ENCODE measurements at regions of chr13 and their contacts with region 1.

Region 1: GRCh38 chr13:53250266-53250875 is 221.8 kb downstream of the OLFM4 start:
- DNase-seq: peak; percentile 15
- ATAC-seq: peak; percentile 91
- H3K4me3 ChIP-seq: no peak overlapping the region
- H3K27ac ChIP-seq: no peak overlapping the region
- H3K4me1 ChIP-seq: no peaks in the 10 kb centered on the region
- H3K27me3 ChIP-seq: no peaks in the 10 kb centered on the region
- CTCF ChIP-seq: peak; percentile 57 to 66 (median 63)
- EP300 ChIP-seq: no peak
- POLR2A ChIP-seq: no peak
- RAD21 ChIP-seq: peak; percentile 88

Region 2: GRCh38 chr13:55245005-55245644 is 1994.8 kb after region 1 on chr13:
- CTCF ChIA-PET with region 1: interaction called, 5 read pairs
- POLR2A ChIA-PET with region 1: no interaction called
- RAD21 ChIA-PET with region 1: interaction called, 11 read pairs
- SMC1A ChIA-PET with region 1: no interaction called
- in situ Hi-C with region 1: no loop called
- intact Hi-C with region 1: loop called (anchors 5 kb)
- DNase-seq: no peak
- ATAC-seq: no peak
- H3K4me3 ChIP-seq: no peak overlapping the region
- H3K27ac ChIP-seq: no peak overlapping the region
- H3K4me1 ChIP-seq: no peaks in the 10 kb centered on the region
- H3K27me3 ChIP-seq: no peaks in the 10 kb centered on the region
- CTCF ChIP-seq: peak in 2 of 3 experiments; percentile 21; a peak in 2 of 6 replicates
- EP300 ChIP-seq: no peak
- POLR2A ChIP-seq: no peak
- RAD21 ChIP-seq: peak; percentile 44; the same call in 1 of the 2 replicates

Measured in GM12878 (cell line).